Activated naive CD4-positive, alpha-beta T cell treated with anti-CD3 and anti-CD28 coated beads for 36 hours (primary cell): ENCODE measurements at regions of chr11 and their contacts with region 1.

Region 1: DNA sequence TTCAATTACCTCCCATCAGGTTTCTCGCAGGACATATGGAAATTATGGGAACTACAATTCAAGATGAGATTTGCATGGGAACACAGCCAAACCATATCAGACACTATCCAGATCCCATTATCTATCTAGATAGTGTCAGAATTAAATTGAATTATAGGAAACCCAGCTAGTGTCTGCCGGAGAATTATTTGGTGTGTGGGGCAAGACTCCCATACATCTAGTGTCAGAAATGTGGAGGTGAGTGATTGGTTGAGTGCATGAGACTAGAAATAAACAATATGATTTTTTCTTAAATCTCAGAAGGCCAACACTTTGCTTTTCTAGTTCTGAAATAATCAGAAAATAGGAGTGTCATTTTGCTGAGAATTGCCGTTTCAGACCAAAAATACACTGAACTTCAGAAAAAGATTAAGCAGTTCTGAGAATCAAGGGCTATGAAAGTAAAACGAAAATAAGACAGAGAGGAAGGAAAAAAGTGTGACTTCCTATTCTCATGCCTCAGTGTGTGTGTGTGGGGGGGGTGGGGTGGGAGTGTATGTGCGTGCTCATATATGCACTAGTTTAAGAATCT is 21.3 kb downstream of the CASP12 start:
- DNase-seq: no peak
- H3K4me3 Mint-ChIP-seq: peak overlapping the region; percentile 22
- H3K27ac Mint-ChIP-seq: peak overlapping the region; percentile 59
- H3K4me1 Mint-ChIP-seq: peaks cover 32% of the 10 kb centered on the region
- H3K27me3 Mint-ChIP-seq: no peaks in the 10 kb centered on the region

Region 2: DNA sequence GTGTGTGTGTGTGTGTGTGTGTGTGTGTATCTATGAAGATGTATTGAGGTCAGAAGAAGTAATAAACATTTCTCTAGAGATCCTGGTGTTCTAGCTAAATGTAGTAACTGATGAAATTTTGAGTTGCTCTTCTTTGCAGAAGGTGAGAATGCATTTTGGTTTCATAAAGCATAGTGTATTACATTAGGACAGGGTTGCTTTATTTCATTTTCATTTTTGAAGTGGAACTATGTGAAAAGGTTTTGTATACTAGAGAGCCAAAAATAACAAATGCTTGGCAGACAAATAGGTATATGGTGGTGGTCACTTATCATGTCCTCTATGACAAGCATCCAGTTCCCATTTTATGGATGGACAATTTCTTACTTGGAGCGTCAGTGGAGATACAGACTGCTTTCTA is 77.7 kb before region 1 on chr11:
- CTCF ChIA-PET with region 1: no interaction called
- intact Hi-C with region 1: loop called (anchors 2 kb)
- DNase-seq: no peak
- H3K4me3 Mint-ChIP-seq: peak overlapping the region; percentile 53
- H3K27ac Mint-ChIP-seq: peak overlapping the region; percentile 68
- H3K4me1 Mint-ChIP-seq: peaks cover 34% of the 10 kb centered on the region
- H3K27me3 Mint-ChIP-seq: no peaks in the 10 kb centered on the region

Region 3: DNA sequence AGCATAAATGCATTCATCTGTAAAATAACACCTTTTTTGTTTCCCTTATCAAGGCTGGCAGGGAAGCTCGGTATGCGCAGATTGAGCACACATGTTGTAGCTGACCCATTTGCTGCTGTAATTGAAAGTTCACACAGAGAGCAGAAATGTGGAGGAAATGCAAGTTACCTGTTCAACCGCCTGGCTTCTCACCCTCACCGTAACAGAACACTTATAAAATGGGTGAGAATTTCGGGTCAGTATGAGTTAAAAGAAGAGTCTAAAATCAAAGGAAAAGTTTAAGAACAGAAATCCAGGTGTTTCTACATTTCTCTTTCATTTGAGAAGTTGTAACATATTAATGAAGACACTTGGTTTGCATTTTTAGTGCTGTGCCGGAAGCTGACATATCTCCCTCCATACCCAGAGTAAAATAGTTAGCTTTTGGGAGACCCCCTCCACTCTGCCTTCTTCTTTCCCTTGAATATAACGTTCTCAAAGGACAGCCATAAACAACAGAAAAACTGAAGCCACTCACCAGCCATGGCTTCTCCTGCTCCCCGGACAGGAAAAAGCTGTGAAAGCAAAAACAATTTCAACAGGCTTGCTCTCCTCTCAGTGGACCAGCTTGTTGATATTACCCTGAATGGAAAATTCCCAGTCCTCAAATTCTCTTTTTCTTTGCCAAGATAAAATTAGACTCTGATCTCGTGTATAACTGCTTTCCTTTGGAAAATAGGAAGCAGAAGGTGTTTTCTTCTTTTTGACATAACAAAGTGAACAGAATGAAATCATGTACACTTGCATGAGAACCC is 21.1 kb after region 1 on chr11 and contains the start of gene CASP12:
- CTCF ChIA-PET with region 1: interaction called, 4 read pairs
- intact Hi-C with region 1: loop called (anchors 1 kb)
- DNase-seq: peak; percentile 32
- H3K4me3 Mint-ChIP-seq: peak within 1 kb of the TSS; percentile 64
- H3K27ac Mint-ChIP-seq: peak within 1 kb of the TSS; percentile 76
- H3K4me1 Mint-ChIP-seq: peaks cover 26% of the 10 kb centered on the region
- H3K27me3 Mint-ChIP-seq: no peaks in the 10 kb centered on the region
- total RNA-seq, gene CASP12: not detected

Region 4: GRCh38 chr11:104956528-104956927 is 79.6 kb after region 1 on chr11:
- CTCF ChIA-PET with region 1: no interaction called
- intact Hi-C with region 1: no loop called
- DNase-seq: no peak
- H3K4me3 Mint-ChIP-seq: no peak overlapping the region
- H3K27ac Mint-ChIP-seq: no peak overlapping the region
- H3K4me1 Mint-ChIP-seq: peaks cover 50% of the 10 kb centered on the region
- H3K27me3 Mint-ChIP-seq: no peaks in the 10 kb centered on the region

Region 5: GRCh38 chr11:104984808-104985207 is 107.9 kb after region 1 on chr11:
- CTCF ChIA-PET with region 1: no interaction called
- intact Hi-C with region 1: no loop called
- DNase-seq: no peak
- H3K4me3 Mint-ChIP-seq: no peak overlapping the region
- H3K27ac Mint-ChIP-seq: no peak overlapping the region
- H3K4me1 Mint-ChIP-seq: peaks cover 2% of the 10 kb centered on the region
- H3K27me3 Mint-ChIP-seq: no peaks in the 10 kb centered on the region